ENCODE measurements at regions of chr7 and their contacts with region 1.

Region 1: GRCh38 chr7:98841179-98841997 is 28.4 kb downstream of the TMEM130 start:
- DNase-seq: no peak
- H3K4me3 ChIP-seq: no peak overlapping the region
- H3K27me3 ChIP-seq: peaks cover 7% of the 10 kb centered on the region
- CTCF ChIP-seq: peak; percentile 96

Region 2: DNA sequence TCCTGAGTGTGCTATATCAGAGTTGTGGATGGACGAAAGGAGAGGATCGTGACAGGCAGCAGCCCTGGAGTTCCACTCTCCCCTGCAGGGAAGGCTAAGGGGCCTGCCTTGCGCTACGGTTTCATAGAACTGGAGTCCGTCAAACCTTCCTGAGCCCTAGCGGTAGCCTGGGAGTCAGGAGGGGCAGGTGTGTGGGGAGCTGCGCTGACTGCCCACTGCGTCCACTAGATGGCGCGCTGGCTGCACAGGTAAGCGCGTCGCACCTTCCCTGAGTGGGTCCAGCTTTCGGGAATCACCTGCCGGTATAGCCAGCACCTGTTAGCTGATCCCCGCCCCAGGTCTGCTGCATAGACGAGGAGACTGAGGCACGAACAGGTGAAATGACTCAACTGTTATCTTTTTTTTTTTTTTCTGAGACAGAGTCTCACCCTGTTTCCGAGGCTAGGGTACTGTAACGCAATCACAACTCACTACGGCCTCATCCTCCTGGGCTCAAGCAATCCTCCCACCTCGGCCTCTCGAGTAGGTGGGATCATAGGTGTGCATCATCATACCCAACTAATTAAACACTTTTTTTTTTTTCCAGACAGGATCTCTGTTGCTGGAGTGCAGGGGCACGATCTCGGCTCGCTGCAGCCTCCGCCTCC is 420.3 kb before region 1 on chr7:
- CTCF ChIA-PET with region 1: interaction called, 29 read pairs
- POLR2A ChIA-PET with region 1: no interaction called
- DNase-seq: no peak
- H3K4me3 ChIP-seq: no peak overlapping the region
- H3K27me3 ChIP-seq: no peaks in the 10 kb centered on the region
- CTCF ChIP-seq: peak; percentile 93

Region 3: GRCh38 chr7:98569691-98570337 is 271.6 kb before region 1 on chr7:
- CTCF ChIA-PET with region 1: no interaction called
- POLR2A ChIA-PET with region 1: no interaction called
- DNase-seq: no peak
- H3K4me3 ChIP-seq: no peak overlapping the region
- H3K27me3 ChIP-seq: no peaks in the 10 kb centered on the region
- CTCF ChIP-seq: no peak

Region 4: DNA sequence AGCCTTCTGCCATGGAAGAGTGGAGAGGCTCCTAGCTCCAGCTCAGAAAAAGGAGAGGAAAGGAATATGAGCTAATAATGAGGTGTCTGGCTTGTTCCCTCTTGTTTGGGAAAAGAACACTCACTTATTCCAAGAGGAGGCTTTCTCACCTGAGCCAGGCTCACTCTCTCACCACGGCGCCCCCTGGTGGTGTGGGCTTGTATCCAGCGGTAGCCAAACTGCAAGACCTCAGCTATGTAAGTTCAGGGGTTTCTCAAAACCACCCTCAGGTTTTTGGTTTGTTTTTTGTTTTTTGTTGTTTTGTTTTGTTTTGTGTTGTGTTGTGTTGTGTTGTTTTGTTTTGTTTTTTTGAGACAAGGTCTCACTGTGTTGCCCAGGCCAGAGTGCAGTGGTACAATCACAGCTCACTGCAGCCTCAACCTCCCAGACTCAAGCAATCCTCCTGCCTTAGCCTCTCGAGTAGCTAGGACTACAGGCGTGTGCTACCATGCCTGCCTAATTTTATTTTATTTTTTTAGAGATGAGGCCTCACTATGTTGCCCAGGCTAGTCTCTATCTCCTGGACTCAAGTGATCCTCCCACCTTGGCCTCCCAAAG is 95.6 kb before region 1 on chr7:
- CTCF ChIA-PET with region 1: interaction called, 10 read pairs
- POLR2A ChIA-PET with region 1: no interaction called
- DNase-seq: no peak
- H3K4me3 ChIP-seq: no peak overlapping the region
- H3K27me3 ChIP-seq: no peaks in the 10 kb centered on the region; the same call in 1 of the 2 replicates
- CTCF ChIP-seq: peak; percentile 89

Region 5: GRCh38 chr7:98855610-98856422 is 14.4 kb after region 1 on chr7:
- CTCF ChIA-PET with region 1: interaction called, 34 read pairs
- POLR2A ChIA-PET with region 1: no interaction called
- DNase-seq: no peak
- H3K4me3 ChIP-seq: no peak overlapping the region
- H3K27me3 ChIP-seq: no peaks in the 10 kb centered on the region
- CTCF ChIP-seq: no peak

Region 6: DNA sequence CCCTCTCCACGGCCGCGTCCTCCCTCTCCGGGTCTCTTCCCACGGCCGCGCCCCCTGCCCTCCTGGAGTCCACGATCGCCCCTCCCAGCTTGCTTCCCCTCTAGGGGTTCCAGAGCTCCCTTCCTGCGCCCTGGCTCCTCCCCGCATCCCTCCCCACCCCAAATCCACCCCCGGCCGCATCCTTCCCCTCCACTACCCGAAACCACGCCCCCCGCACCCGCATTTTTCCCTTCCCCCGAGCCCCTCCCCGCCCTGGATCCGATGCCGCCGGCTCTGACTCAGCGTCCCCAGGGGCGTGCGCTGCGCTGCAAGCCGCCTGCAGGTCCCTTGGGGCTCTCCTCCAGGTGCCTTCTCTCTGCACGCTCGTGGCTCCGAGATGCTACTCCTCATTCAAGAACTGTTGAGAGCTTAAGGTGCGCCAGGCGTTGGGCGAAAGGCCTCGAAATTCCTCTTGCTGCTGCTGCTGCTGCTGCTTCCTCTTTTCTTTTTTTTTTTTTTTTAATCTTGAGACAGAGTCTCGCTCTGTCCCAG is 28.8 kb after region 1 on chr7:
- CTCF ChIA-PET with region 1: interaction called, 12 read pairs
- POLR2A ChIA-PET with region 1: no interaction called
- DNase-seq: no peak
- H3K4me3 ChIP-seq: peak overlapping the region; percentile 56
- H3K27me3 ChIP-seq: peaks cover 10% of the 10 kb centered on the region
- CTCF ChIP-seq: 0 out of 2 replicates have a peak, but pooled peaks have one; percentile 1

Measured in BJ (cell line).